ENCODE measurements at regions of chr1 and their contacts with region 1.

Region 1: GRCh38 chr1:24502709-24503058 is at the start of gene RCAN3:
- DNase-seq: peak; percentile 89
- ATAC-seq: peak; percentile 86
- H3K4me3 Mint-ChIP-seq: peak within 1 kb of the TSS; percentile 91
- H3K27ac Mint-ChIP-seq: peak within 1 kb of the TSS; percentile 97
- H3K4me1 Mint-ChIP-seq: peaks cover 52% of the 10 kb centered on the region
- H3K27me3 Mint-ChIP-seq: no peaks in the 10 kb centered on the region
- CTCF ChIP-seq: no peak
- total RNA-seq, gene RCAN3: 22.8 and 23.6 TPM in 2 replicates

Region 2: DNA sequence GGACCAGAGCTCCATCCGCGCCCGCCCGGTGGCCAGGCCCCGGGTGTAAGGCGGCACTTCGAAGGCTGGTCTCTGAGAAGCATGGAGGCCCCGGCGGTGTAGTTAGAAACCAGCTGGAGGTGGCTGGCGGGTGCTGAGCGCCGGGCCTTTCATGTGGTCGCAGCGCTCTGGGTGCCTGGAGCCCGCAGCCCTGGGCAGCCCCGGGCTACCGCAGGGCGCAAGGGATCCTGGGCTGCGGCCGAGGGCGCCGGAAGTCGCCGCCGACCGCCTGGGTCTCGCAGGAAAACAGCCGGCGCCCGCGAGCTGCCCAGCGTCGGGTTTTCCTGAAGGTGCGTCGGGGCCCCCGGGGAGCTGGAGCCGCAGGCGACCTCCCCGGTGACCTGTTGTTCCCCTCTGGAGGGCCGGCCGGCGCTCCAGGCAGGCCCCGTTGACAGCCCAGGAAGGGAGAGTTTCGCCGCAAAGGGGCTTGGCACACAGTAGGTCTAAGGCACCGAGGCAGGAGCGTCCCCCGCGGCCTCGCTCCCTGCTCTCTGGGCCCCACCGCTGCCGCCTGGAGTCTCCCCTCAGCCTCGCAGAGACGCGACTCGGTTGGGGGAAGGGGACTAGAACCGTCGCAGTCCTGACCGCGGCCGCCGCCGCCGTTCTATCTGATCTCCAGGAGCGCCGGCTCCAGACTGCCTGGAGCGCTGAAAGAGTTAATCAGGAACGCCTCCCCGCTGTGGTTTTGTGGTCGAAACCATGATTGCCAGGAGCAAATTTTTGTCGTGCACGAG is 180.8 kb before region 1 on chr1:
- CTCF ChIA-PET with region 1: no interaction called
- POLR2A ChIA-PET with region 1: interaction called, 13 read pairs
- intact Hi-C with region 1: no loop called
- DNase-seq: peak; percentile 59
- ATAC-seq: peak; percentile 77
- H3K4me3 Mint-ChIP-seq: peak overlapping the region; percentile 83
- H3K27ac Mint-ChIP-seq: peak overlapping the region; percentile 72
- H3K4me1 Mint-ChIP-seq: peaks cover 49% of the 10 kb centered on the region
- H3K27me3 Mint-ChIP-seq: peaks cover 34% of the 10 kb centered on the region
- CTCF ChIP-seq: no peak

Region 3: DNA sequence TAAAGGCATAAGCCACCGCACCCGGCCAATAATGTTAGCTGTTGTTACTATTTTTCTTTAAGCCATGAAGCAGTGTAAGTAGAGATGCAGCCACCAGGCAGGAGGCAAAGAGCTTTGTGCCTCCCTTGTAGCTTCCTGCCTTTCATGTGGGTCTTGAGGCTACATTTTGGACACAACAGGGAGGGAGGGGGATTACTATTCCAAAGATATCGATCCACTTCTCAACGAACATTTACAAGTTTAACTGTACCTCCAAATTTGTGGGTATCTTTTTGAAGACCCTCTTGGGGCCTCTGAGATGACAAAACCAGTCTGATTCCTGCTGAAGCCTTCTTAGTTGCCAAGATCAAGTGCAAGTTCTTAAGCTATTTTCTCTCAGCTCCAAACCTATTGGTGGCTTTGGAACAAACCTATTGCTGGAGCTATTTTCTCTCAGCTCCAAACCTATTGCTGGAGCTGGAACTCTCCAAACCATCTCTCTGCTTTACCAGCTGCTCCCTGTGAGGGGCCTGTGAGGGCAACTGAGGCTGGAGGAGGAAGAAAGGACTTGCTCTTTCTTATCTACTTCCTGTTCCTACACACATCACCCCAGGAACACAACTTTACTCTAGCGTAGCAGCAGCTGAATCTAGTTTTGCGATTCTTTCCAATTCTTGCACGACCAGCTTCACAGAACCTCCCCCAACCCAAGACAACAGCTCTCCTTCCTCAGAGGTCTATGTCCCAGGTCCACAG is 16.2 kb before region 1 on chr1:
- CTCF ChIA-PET with region 1: interaction called, 3 read pairs
- POLR2A ChIA-PET with region 1: interaction called, 42 read pairs
- intact Hi-C with region 1: loop called (anchors 1 kb)
- DNase-seq: no peak
- ATAC-seq: no peak
- H3K4me3 Mint-ChIP-seq: no peak overlapping the region
- H3K27ac Mint-ChIP-seq: peak overlapping the region; percentile 24
- H3K4me1 Mint-ChIP-seq: peaks cover 39% of the 10 kb centered on the region
- H3K27me3 Mint-ChIP-seq: no peaks in the 10 kb centered on the region
- CTCF ChIP-seq: no peak

Region 4: GRCh38 chr1:24536391-24536840 is 33.7 kb after region 1 on chr1:
- CTCF ChIA-PET with region 1: no interaction called
- POLR2A ChIA-PET with region 1: interaction called, 42 read pairs
- intact Hi-C with region 1: loop called (anchors 1 kb)
- DNase-seq: peak; percentile 51
- ATAC-seq: peak; percentile 73
- H3K4me3 Mint-ChIP-seq: peak overlapping the region; percentile 81
- H3K27ac Mint-ChIP-seq: peak overlapping the region; percentile 99
- H3K4me1 Mint-ChIP-seq: peaks cover 74% of the 10 kb centered on the region
- H3K27me3 Mint-ChIP-seq: no peaks in the 10 kb centered on the region
- CTCF ChIP-seq: no peak

Region 5: DNA sequence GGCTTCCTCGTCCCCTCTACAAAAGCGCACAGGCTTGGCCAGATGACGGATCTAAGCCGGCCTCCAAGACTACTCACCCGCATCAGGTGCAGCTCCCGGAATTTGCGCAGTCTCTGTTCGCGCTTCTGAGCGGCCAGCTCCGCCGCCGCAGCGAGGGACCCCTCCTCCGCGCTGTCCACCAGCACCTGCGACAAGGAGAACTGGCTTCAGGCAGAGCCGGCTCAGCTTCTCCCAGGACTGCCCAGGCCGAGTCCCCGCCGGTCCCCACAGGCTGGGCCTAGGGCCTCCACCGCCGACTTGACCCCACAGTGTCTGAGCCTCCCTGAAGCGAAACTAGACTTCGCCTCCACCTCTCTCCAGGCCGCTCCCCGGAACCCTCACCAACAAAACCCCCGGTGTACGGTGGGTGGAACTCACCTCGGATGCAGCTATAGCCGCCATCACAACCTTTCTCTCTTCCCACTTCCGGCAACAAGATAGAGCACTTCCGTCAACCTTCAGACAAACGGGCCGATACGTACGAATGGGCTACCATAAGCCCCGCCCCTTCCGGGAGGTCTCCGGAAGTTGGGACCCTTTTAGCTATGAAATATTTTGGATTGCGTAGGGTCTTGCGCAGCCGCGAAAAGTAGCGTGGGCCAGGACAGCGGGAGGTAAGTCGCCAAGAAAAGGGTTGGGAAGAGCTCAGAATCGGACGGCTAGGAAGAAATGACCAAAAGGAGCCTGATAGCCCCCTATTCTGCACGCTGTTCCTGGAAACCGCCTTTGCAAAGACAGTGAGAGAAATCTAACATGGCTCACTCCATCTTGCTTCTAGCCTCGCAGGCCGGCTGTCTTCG is 729.6 kb after region 1 on chr1 and contains the start of gene SYF2:
- CTCF ChIA-PET with region 1: no interaction called
- POLR2A ChIA-PET with region 1: interaction called, 10 read pairs
- intact Hi-C with region 1: no loop called
- DNase-seq: peak; percentile 81
- ATAC-seq: peak; percentile 87
- H3K4me3 Mint-ChIP-seq: no peak within 1 kb of the TSS
- H3K27ac Mint-ChIP-seq: no peak within 1 kb of the TSS
- H3K4me1 Mint-ChIP-seq: peaks cover 36% of the 10 kb centered on the region
- H3K27me3 Mint-ChIP-seq: no peaks in the 10 kb centered on the region
- CTCF ChIP-seq: no peak
- total RNA-seq, gene SYF2: 51.1 and 53.9 TPM in 2 replicates